Activated B cell treated with CpG ODN at 0.5 μM for 24 hours (primary cell): ENCODE measurements at regions of chr10 and their contacts with region 1.

Region 1: GRCh38 chr10:86710987-86711512 is 42.7 kb downstream of the LDB3 start:
- DNase-seq: peak; percentile 84
- ATAC-seq: peak; percentile 87
- H3K4me3 Mint-ChIP-seq: peak overlapping the region; percentile 85
- H3K27ac Mint-ChIP-seq: peak overlapping the region; percentile 93
- H3K4me1 Mint-ChIP-seq: peaks cover 10% of the 10 kb centered on the region
- H3K27me3 Mint-ChIP-seq: no peaks in the 10 kb centered on the region
- CTCF ChIP-seq: no peak

Region 2: GRCh38 chr10:86411281-86411841 is 299.7 kb before region 1 on chr10:
- CTCF ChIA-PET with region 1: no interaction called
- POLR2A ChIA-PET with region 1: no interaction called
- intact Hi-C with region 1: loop called (anchors 1 kb)
- DNase-seq: no peak
- ATAC-seq: no peak
- H3K4me3 Mint-ChIP-seq: peak overlapping the region; percentile 62
- H3K27ac Mint-ChIP-seq: peak overlapping the region; percentile 83
- H3K4me1 Mint-ChIP-seq: peaks cover 50% of the 10 kb centered on the region
- H3K27me3 Mint-ChIP-seq: no peaks in the 10 kb centered on the region
- CTCF ChIP-seq: no peak

Region 3: GRCh38 chr10:86755740-86756510 is 44.9 kb after region 1 on chr10:
- CTCF ChIA-PET with region 1: no interaction called
- POLR2A ChIA-PET with region 1: interaction called, 34 read pairs
- intact Hi-C with region 1: loop called (anchors 1 kb)
- DNase-seq: peak; percentile 90
- ATAC-seq: peak; percentile 94
- H3K4me3 Mint-ChIP-seq: peak overlapping the region; percentile 86
- H3K27ac Mint-ChIP-seq: peak overlapping the region; percentile 63
- H3K4me1 Mint-ChIP-seq: peaks cover 40% of the 10 kb centered on the region
- H3K27me3 Mint-ChIP-seq: peaks cover 15% of the 10 kb centered on the region
- CTCF ChIP-seq: no peak

Region 4: GRCh38 chr10:86888585-86889381 is 177.7 kb after region 1 on chr10:
- CTCF ChIA-PET with region 1: interaction called, 4 read pairs
- POLR2A ChIA-PET with region 1: interaction called, 5 read pairs
- intact Hi-C with region 1: loop called (anchors 2 kb)
- DNase-seq: no peak
- ATAC-seq: peak; percentile 97
- H3K4me3 Mint-ChIP-seq: peak overlapping the region; percentile 5
- H3K27ac Mint-ChIP-seq: peak overlapping the region; percentile 35
- H3K4me1 Mint-ChIP-seq: peaks cover 8% of the 10 kb centered on the region
- H3K27me3 Mint-ChIP-seq: no peaks in the 10 kb centered on the region
- CTCF ChIP-seq: no peak

Region 5: DNA sequence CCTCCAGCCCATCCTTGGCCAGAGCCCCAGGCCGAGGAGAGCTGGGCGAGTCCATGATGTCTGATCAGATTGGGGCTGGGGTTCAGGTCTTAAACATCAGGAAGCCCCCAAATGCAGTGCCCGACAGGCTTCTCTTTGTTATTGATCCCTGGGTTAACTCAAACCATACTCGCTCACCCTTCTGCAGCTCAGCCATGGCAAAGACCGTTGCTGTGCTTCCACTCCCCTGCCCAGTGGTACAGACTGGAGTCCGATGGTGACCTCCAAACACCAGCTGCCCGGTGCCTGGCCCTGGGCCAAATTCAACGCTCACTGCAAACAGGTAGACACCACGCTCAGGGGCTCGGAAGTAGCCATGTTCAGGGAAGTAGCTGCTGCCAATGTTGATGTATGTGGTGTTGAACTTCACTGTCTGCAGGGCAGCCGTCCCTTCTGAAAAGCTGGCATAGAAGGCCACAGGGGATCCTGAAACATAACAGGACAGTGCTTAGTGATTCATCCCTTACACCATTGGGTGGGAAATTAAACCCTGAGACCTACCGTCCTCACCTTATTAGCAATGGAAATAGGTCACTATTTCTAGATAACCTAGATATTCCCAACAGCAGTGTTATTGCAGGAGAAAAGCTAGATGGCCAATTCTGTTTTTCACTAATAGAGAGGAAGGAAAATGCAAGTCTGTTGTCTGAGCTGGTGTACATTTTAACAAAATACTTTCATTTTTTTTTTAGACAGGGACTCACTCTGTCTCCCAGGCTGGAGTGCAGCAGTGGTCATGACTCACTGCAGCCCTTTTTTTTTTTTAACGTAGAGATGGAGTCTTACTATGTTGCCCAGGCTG is 225.8 kb after region 1 on chr10:
- CTCF ChIA-PET with region 1: no interaction called
- POLR2A ChIA-PET with region 1: no interaction called
- intact Hi-C with region 1: loop called (anchors 1 kb)
- DNase-seq: no peak
- ATAC-seq: no peak
- H3K4me3 Mint-ChIP-seq: no peak overlapping the region
- H3K27ac Mint-ChIP-seq: no peak overlapping the region
- H3K4me1 Mint-ChIP-seq: peaks cover 4% of the 10 kb centered on the region
- H3K27me3 Mint-ChIP-seq: no peaks in the 10 kb centered on the region
- CTCF ChIP-seq: no peak

Region 6: DNA sequence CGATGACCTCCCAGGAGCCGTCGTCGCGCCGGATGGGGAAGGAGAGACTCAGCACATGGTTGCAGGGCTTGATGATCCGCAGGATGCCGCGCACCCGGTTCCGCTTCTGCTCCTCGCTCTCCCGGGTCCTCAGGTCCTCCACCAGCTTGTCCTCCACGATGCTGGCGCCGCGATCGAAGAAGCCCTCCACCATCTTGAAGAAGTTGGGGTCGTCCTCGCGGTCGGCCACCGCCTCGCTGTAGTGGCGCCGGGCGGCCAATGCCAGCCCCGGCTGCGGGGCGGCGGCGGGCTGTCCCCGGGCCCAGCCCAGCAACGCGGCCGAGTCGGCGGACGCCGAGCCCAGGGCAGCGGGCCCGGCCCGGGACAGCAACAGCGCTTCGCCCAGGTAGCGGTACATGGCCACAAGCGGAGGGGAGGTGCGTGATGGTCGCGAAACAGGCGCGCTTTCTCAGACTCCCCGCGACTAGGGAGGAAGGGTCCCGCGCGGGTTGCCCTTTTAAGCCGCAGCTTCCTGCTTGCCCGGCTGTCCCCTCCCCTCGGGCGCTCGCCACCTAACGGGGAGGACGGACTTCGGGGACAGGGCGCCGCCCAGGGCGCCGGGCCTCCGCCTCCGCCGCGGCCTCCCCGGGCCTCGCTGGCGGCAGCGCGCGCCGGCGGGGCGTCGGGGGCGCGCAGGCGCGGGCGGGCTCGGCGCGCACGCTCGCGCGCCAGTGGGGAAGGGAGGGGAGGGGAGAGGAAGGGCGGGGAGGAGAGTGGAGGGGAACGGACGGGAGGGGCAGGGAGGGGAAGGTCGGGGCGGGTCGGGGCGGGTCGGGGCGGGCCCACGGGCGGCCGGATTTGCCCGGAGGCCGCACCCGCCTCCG is 383.6 kb after region 1 on chr10 and contains the starts of genes GLUD1 and SHLD2:
- CTCF ChIA-PET with region 1: no interaction called
- POLR2A ChIA-PET with region 1: interaction called, 7 read pairs
- intact Hi-C with region 1: loop called (anchors 1 kb)
- DNase-seq: peak; percentile 89
- ATAC-seq: peak; percentile 76
- H3K4me3 Mint-ChIP-seq: peak within 1 kb of the TSS; percentile 92
- H3K27ac Mint-ChIP-seq: peak within 1 kb of the TSS; percentile 91
- H3K4me1 Mint-ChIP-seq: peaks cover 42% of the 10 kb centered on the region
- H3K27me3 Mint-ChIP-seq: no peaks in the 10 kb centered on the region
- CTCF ChIP-seq: no peak
- total RNA-seq, gene GLUD1: 96.5 and 98.4 TPM in 2 replicates
- total RNA-seq, gene SHLD2: 29.3 and 29.6 TPM in 2 replicates